Activated T-helper 2 cell treated with anti-CD3 and anti-CD28 coated beads, Interferon-gamma antibody, Interleukin-2, Interleukin-4, amounts not matched to agents 10 μg/mL and 5 μg/mL and 100 μg/mL, durations not matched to agents 14 hours and 24 hours and 36 hours (primary cell): ENCODE measurements at regions of chr3 and their contacts with region 1.

Region 1: DNA sequence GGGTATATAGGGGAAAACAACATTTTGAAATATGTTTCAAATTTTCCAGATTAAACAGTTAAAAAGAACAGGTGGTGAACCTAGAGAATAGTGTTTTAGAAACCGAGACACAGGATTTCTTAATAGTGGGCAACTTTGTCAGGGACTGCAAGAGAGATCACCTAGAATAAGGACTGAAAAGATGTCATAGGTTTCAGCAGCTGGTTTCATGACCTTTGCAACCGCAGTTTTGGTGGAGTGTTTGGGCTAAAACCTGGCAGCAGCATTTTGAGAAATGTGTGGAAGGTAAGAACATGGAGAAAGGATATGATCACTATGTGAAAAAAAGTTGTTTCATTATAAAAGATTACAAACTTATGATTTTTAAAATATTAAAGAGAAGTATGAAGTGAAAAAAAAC is 34.9 kb downstream of the PRKCI start:
- DNase-seq: no peak
- H3K4me3 Mint-ChIP-seq: no peak overlapping the region
- H3K27ac Mint-ChIP-seq: peak overlapping the region; percentile 54
- H3K4me1 Mint-ChIP-seq: peaks cover 37% of the 10 kb centered on the region
- H3K27me3 Mint-ChIP-seq: no peaks in the 10 kb centered on the region

Region 2: GRCh38 chr3:170277833-170278580 is 20.9 kb after region 1 on chr3:
- intact Hi-C with region 1: loop called (anchors 2 kb)
- DNase-seq: no peak
- H3K4me3 Mint-ChIP-seq: peak overlapping the region; percentile 68
- H3K27ac Mint-ChIP-seq: peak overlapping the region; percentile 68
- H3K4me1 Mint-ChIP-seq: peaks cover 26% of the 10 kb centered on the region
- H3K27me3 Mint-ChIP-seq: no peaks in the 10 kb centered on the region

Region 3: DNA sequence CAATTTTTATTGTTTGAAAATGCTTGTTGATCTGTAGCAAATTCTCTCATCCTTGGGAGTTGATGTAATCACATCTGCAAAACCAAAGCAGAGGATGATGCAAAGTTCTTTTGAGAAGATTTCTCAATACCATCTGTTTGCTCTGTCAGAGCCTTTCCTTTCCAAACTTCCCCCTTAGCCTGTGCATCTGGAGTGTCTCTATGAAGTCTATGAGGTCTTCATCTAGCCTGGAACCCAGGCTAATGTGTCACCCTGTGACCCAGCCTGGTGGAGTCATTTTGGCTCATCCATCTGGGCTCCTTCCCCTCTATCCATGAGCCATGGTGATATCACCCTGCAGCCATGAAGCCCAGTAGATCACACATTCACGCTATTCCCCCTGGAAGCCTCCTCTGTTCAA is 451.9 kb after region 1 on chr3:
- intact Hi-C with region 1: no loop called
- DNase-seq: no peak
- H3K4me3 Mint-ChIP-seq: no peak overlapping the region
- H3K27ac Mint-ChIP-seq: no peak overlapping the region
- H3K4me1 Mint-ChIP-seq: no peaks in the 10 kb centered on the region
- H3K27me3 Mint-ChIP-seq: peaks cover 8% of the 10 kb centered on the region